Common myeloid progenitor, CD34-positive (primary cell): ENCODE measurements at regions of chr3 and their contacts with region 1.

Region 1: GRCh38 chr3:185733980-185734724 is 90.7 kb downstream of the IGF2BP2 start:
- DNase-seq: peak; percentile 78 to 82 (median 82)
- H3K4me3 ChIP-seq: no peak overlapping the region
- H3K27ac ChIP-seq: no peak overlapping the region
- H3K4me1 ChIP-seq: peaks cover 0 to 25% (median 18%) of the 10 kb centered on the region in 4 experiments
- H3K27me3 ChIP-seq: no peaks in the 10 kb centered on the region

Region 2: DNA sequence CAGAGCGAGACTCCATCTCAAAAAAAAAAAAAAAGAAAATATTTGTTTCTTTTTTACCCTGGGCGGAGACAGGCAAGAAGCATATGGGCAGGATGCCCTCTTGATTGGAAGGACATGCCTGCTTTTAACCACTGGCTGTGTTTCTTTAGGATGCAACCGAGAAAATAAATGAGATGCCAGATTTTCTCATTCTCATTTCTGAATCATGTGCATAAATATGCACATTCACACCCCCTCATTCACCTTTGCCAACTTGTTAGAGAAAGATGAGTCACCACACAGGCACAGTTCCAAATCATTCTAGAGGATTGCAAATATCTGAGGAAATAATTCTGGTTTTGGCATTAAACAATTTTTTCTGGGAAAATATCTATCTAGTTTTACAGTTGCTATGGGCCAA is 185.0 kb before region 1 on chr3:
- CTCF ChIA-PET with region 1: no interaction called
- POLR2A ChIA-PET with region 1: no interaction called
- DNase-seq: peak; percentile 14 to 40 (median 38)
- H3K4me3 ChIP-seq: no peak overlapping the region
- H3K27ac ChIP-seq: no peak overlapping the region
- H3K4me1 ChIP-seq: peaks cover 0 to 2% (median 0%) of the 10 kb centered on the region in 4 experiments
- H3K27me3 ChIP-seq: no peaks in the 10 kb centered on the region

Region 3: GRCh38 chr3:185720326-185720725 is 13.8 kb before region 1 on chr3:
- CTCF ChIA-PET with region 1: interaction called, 14 read pairs
- POLR2A ChIA-PET with region 1: interaction called, 3 read pairs
- DNase-seq: no peak
- H3K4me3 ChIP-seq: no peak overlapping the region
- H3K27ac ChIP-seq: no peak overlapping the region
- H3K4me1 ChIP-seq: peaks cover 0 to 20% (median 15%) of the 10 kb centered on the region in 4 experiments
- H3K27me3 ChIP-seq: no peaks in the 10 kb centered on the region

Region 4: GRCh38 chr3:185744997-185745843 is 11.1 kb after region 1 on chr3:
- CTCF ChIA-PET with region 1: interaction called, 34 read pairs
- POLR2A ChIA-PET with region 1: interaction called, 3 read pairs
- DNase-seq: peak in 1 of 3 donors; percentile 60
- H3K4me3 ChIP-seq: peak overlapping the region in 4 of 7 experiments; percentile 24 to 58 (median 42)
- H3K27ac ChIP-seq: peak overlapping the region; percentile 35 to 79
- H3K4me1 ChIP-seq: peaks cover 25 to 63% (median 51%) of the 10 kb centered on the region in 4 experiments
- H3K27me3 ChIP-seq: no peaks in the 10 kb centered on the region